Pancreas (tissue), 10 donors: ENCODE measurements at regions of chr16 and their contacts with region 1.

Region 1: GRCh38 chr16:16137056-16137455 is 86.2 kb downstream of the ABCC6 start:
- DNase-seq: no peak
- ATAC-seq: no peak
- H3K4me3 ChIP-seq: no peak overlapping the region
- H3K27ac ChIP-seq: no peak overlapping the region
- H3K4me1 ChIP-seq: peaks cover 0 to 5% (median 0%) of the 10 kb centered on the region in 3 donors
- H3K27me3 ChIP-seq: no peaks in the 10 kb centered on the region
- CTCF ChIP-seq: no peak

Region 2: DNA sequence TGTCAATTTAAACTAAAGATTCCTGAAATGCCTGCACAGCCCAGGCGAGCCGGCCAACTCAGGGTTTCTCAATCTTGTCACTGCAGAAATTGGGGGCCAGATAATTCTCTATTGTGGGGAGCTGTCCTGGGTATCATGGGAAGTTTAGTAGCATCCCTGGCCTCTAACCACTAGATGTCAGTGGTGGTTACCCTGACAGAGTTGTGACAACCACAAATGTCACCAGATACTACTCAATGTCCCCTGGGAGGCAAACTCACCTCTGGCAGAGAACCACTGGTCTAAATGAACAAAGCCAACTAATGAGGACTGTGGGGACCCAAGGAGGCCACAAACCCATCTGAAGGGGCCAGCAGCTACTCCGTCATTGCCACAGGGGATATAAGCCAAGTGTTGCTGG is 371.2 kb before region 1 on chr16:
- intact Hi-C with region 1: loop called in 2 of 3 experiments (anchors 5 to 10 kb)
- DNase-seq: peak in 2 of 6 donors; percentile 7 to 22
- ATAC-seq: peak; percentile 70 to 94 (median 88)
- H3K4me3 ChIP-seq: no peak overlapping the region
- H3K27ac ChIP-seq: no peak overlapping the region
- H3K4me1 ChIP-seq: no peaks in the 10 kb centered on the region
- H3K27me3 ChIP-seq: no peaks in the 10 kb centered on the region
- CTCF ChIP-seq: peak; percentile 22 to 53 (median 43)

Region 3: GRCh38 chr16:15874745-15875314 is 262.2 kb before region 1 on chr16:
- intact Hi-C with region 1: loop called in 2 of 3 experiments (anchors 5 to 10 kb)
- DNase-seq: peak in 4 of 6 donors; percentile 29 to 55 (median 37)
- ATAC-seq: peak; percentile 85 to 96 (median 92)
- H3K4me3 ChIP-seq: no peak overlapping the region
- H3K27ac ChIP-seq: no peak overlapping the region
- H3K4me1 ChIP-seq: no peaks in the 10 kb centered on the region
- H3K27me3 ChIP-seq: no peaks in the 10 kb centered on the region
- CTCF ChIP-seq: peak; percentile 37 to 59 (median 47)

Region 4: GRCh38 chr16:15880434-15881308 is 256.4 kb before region 1 on chr16:
- intact Hi-C with region 1: loop called in 2 of 3 experiments (anchors 5 to 10 kb)
- DNase-seq: no peak
- ATAC-seq: no peak
- H3K4me3 ChIP-seq: no peak overlapping the region
- H3K27ac ChIP-seq: no peak overlapping the region
- H3K4me1 ChIP-seq: no peaks in the 10 kb centered on the region
- H3K27me3 ChIP-seq: no peaks in the 10 kb centered on the region
- CTCF ChIP-seq: no peak